ENCODE measurements at regions of chr9 and their contacts with region 1.

Region 1: DNA sequence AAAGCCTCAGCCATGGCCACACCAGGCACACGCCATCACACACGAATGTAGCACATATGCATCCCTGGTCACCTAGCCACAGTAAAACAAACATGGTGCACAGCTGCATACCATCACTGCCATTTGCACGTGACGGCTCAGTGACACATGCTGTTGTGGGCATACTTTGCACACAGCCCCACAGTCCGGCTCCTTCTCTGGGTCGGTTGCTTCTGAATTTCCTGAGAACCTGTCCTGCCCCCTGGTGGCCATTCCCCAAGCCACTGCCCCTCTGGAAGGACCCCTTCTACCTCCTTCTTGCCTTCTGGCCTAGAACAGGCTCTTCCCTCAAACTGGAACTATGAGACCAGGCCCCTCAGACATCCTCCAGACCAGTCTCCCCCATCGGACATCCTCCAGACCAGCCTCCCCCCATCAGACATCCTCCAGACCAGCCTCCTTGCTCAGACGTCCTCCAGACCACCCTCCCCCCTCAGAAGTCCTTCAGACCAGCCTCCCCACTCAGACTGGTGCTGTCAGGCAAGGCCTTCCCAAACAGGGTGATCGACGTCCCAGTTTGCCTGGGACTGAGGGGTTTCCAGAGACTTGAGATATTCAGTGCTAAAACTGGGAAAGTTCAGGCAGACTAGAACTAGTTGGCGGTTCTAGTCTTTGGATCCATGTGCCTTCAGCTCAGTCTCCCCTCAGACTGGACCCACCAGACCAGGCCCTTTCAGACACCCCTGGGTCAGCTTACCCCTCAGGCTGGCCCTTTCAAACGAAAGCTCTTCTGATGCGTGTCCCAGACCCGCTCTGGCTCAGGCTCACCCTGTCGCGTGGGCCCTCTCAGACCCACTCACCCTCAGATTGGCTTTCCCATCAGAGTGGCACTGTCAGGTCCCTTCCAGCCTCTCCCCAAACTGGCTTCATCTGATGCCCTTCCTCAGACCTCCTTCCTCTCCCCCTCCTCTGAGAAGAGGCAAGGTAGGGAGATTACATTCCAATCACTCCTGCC is 24.3 kb upstream of the ENHO start:
- DNase-seq: no peak
- H3K4me3 ChIP-seq: no peak overlapping the region
- H3K27ac ChIP-seq: no peak overlapping the region
- H3K4me1 ChIP-seq: no peaks in the 10 kb centered on the region
- H3K27me3 ChIP-seq: no peaks in the 10 kb centered on the region
- CTCF ChIP-seq: peak in 2 of 3 experiments; percentile 35 to 54
- POLR2A ChIP-seq: no peak

Region 2: DNA sequence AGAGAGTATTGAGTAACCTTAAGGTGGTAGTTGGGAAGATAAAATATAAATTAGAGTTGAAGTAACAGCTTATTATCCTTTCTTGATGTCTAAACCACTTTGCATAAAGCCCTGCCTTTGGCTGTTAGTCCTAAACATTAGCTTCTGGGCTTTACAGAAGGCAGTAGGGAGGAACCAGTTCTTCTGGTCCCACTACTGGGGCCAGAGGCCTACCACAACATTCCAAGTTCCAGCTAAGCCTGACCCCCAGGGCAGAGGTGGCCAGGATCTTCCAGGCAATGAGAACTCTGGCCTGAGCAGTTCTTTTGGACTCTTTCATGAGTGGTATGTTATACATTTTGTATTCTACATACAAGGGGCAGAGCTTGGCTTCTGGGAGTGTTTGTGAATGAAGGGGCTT is 62.4 kb before region 1 on chr9:
- intact Hi-C with region 1: no loop called
- DNase-seq: no peak
- H3K4me3 ChIP-seq: no peak overlapping the region
- H3K27ac ChIP-seq: no peak overlapping the region
- H3K4me1 ChIP-seq: no peaks in the 10 kb centered on the region
- H3K27me3 ChIP-seq: no peaks in the 10 kb centered on the region
- CTCF ChIP-seq: no peak
- POLR2A ChIP-seq: no peak

Region 3: GRCh38 chr9:34603610-34604231 is 56.6 kb after region 1 on chr9:
- intact Hi-C with region 1: loop called (anchors 2 kb)
- DNase-seq: no peak
- H3K4me3 ChIP-seq: no peak overlapping the region
- H3K27ac ChIP-seq: no peak overlapping the region
- H3K4me1 ChIP-seq: peaks cover 5% of the 10 kb centered on the region
- H3K27me3 ChIP-seq: no peaks in the 10 kb centered on the region
- CTCF ChIP-seq: peak; percentile 85 to 92 (median 90)
- POLR2A ChIP-seq: no peak

Measured in vagina (tissue), 2 donors.